ENCODE measurements at regions of chr22 and their contacts with region 1.

Region 1: DNA sequence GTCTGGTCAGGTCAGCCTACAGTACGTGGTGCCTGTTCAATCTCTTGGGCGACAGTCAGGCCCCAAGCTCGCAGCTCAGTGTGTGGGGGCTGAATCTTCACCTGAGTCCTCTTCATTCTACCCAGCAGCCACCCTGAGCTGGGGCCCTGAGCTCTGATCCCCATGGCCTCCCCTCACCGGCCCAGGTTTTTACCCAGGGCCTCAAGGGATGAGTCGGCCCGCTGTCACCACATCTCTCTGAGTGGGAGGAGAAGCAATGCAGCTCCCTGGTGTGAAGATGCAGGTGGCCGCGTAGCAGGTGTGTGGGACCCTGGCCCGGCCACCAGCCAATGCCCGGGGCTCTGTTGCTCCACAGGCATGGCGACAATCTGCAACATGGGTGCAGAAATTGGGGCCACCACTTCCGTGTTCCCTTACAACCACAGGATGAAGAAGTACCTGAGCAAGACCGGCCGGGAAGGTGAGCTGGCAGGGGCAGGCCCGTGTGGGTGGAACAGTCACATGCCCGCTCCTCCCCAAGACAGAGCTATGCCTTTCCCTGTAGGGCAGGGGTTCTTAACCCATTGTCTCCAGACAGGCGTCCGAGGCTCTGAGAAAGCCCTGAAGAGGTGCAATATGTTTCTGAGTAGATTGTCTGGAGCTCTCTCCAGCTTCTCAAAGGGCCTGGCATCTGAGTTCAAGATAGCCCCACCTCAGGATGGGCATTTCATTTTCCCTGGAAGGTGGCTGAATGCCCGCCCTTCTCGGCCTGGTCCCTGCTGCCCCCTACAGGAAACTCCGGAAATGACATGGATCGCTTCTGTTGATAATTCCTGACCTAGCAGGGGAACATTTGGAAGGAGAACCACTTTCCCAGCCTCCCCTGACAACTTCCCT is 26.9 kb downstream of the POLR3H start:
- DNase-seq: peak; percentile 77
- H3K4me3 Mint-ChIP-seq: no peak overlapping the region
- H3K27ac Mint-ChIP-seq: no peak overlapping the region
- H3K4me1 Mint-ChIP-seq: peaks cover 14% of the 10 kb centered on the region
- H3K27me3 Mint-ChIP-seq: no peaks in the 10 kb centered on the region
- CTCF ChIP-seq: peak; percentile 73

Region 2: GRCh38 chr22:40922484-40923303 is 594.7 kb before region 1 on chr22:
- CTCF ChIA-PET with region 1: interaction called, 4 read pairs
- POLR2A ChIA-PET with region 1: no interaction called
- intact Hi-C with region 1: loop called (anchors 1 kb)
- DNase-seq: peak; percentile 66
- H3K4me3 Mint-ChIP-seq: no peak overlapping the region
- H3K27ac Mint-ChIP-seq: no peak overlapping the region
- H3K4me1 Mint-ChIP-seq: peaks cover 5% of the 10 kb centered on the region
- H3K27me3 Mint-ChIP-seq: no peaks in the 10 kb centered on the region
- CTCF ChIP-seq: peak; percentile 64

Region 3: GRCh38 chr22:41397143-41397811 is 120.1 kb before region 1 on chr22:
- CTCF ChIA-PET with region 1: interaction called, 95 read pairs
- POLR2A ChIA-PET with region 1: interaction called, 3 read pairs
- intact Hi-C with region 1: no loop called
- DNase-seq: no peak
- H3K4me3 Mint-ChIP-seq: no peak overlapping the region
- H3K27ac Mint-ChIP-seq: no peak overlapping the region
- H3K4me1 Mint-ChIP-seq: peaks cover 7% of the 10 kb centered on the region
- H3K27me3 Mint-ChIP-seq: no peaks in the 10 kb centered on the region
- CTCF ChIP-seq: no peak

Region 4: GRCh38 chr22:41411021-41411851 is 106.2 kb before region 1 on chr22:
- CTCF ChIA-PET with region 1: interaction called, 17 read pairs
- POLR2A ChIA-PET with region 1: interaction called, 6 read pairs
- intact Hi-C with region 1: no loop called
- DNase-seq: no peak
- H3K4me3 Mint-ChIP-seq: no peak overlapping the region
- H3K27ac Mint-ChIP-seq: peak overlapping the region; percentile 33
- H3K4me1 Mint-ChIP-seq: peaks cover 25% of the 10 kb centered on the region
- H3K27me3 Mint-ChIP-seq: no peaks in the 10 kb centered on the region
- CTCF ChIP-seq: no peak

Region 5: GRCh38 chr22:41468381-41469217 is 48.8 kb before region 1 on chr22 and contains the starts of genes ACO2 and PHF5A:
- CTCF ChIA-PET with region 1: interaction called, 14 read pairs
- POLR2A ChIA-PET with region 1: interaction called, 27 read pairs
- intact Hi-C with region 1: no loop called
- DNase-seq: peak; percentile 98
- H3K4me3 Mint-ChIP-seq: peak within 1 kb of the TSS; percentile 96
- H3K27ac Mint-ChIP-seq: peak within 1 kb of the TSS; percentile 100
- H3K4me1 Mint-ChIP-seq: peaks cover 33% of the 10 kb centered on the region
- H3K27me3 Mint-ChIP-seq: no peaks in the 10 kb centered on the region
- CTCF ChIP-seq: no peak
- total RNA-seq, gene ACO2: 105 and 109 TPM in 2 replicates
- total RNA-seq, gene PHF5A: 62.3 and 68.8 TPM in 2 replicates

Region 6: GRCh38 chr22:41501209-41501608 is 16.2 kb before region 1 on chr22:
- CTCF ChIA-PET with region 1: interaction called, 15 read pairs
- POLR2A ChIA-PET with region 1: interaction called, 4 read pairs
- intact Hi-C with region 1: no loop called
- DNase-seq: peak; percentile 41
- H3K4me3 Mint-ChIP-seq: no peak overlapping the region
- H3K27ac Mint-ChIP-seq: no peak overlapping the region
- H3K4me1 Mint-ChIP-seq: peaks cover 8% of the 10 kb centered on the region
- H3K27me3 Mint-ChIP-seq: no peaks in the 10 kb centered on the region
- CTCF ChIP-seq: peak; percentile 24

Measured in MCF 10A (cell line).